CD14-positive monocyte (primary cell): ENCODE measurements at regions of chr3 and their contacts with region 1.

Region 1: DNA sequence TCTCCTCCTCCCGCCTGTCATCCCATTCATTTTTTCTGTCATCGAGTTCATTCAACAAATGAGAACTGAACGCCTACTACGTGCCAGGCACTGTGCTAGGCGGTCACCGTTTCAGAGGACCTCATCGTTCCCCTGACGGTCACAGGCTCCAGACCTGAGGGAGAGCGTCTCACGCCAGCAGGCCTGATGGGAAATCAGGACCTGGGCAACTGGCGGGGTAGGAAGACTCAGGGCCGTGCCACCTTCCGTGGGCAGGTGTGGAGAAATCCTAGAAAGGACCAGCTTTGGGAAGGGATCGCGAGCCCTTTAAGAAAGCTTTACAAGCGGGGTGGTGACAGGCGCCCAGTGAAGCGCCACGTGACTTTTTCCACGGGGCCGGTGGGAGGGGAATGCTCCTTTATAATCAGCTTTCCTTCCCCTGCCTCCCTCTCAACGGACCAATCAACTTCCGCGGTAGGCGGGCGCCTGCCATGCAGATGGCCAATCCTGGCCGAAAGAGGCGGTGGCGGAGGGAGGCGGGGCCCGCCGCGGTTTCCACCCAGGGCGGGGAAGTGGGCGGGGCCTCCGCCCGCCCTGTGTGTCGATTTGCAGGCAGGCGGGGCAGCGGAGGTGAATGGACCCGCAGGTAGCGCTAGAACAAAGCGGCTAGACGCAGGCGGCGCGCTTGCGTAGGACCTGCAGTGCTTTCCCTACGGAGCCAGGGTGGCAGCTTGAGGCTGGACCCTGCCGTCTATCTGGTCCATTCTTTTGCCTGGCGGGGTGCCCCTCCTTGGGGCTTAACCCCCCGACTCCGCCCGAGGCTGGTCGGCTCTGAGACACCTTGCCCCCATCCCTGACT is 816 bp upstream of the DUSP7 start:
- DNase-seq: peak; percentile 97 to 99 (median 98)
- H3K4me3 ChIP-seq: peak overlapping the region; percentile 55 to 89 (median 65)
- H3K4me3 Mint-ChIP-seq: peak overlapping the region; percentile 85 to 92
- H3K27ac ChIP-seq: peak overlapping the region; percentile 88 to 92
- H3K27ac Mint-ChIP-seq: peak overlapping the region; percentile 96 to 97 (median 96)
- H3K4me1 ChIP-seq: peaks cover 54 to 60% of the 10 kb centered on the region in 2 donors
- H3K4me1 Mint-ChIP-seq: peaks cover 53% of the 10 kb centered on the region
- H3K27me3 ChIP-seq: no peaks in the 10 kb centered on the region
- H3K27me3 Mint-ChIP-seq: peaks cover 0 to 4% (median 0%) of the 10 kb centered on the region in 3 donors
- CTCF ChIP-seq: no peak

Region 2: DNA sequence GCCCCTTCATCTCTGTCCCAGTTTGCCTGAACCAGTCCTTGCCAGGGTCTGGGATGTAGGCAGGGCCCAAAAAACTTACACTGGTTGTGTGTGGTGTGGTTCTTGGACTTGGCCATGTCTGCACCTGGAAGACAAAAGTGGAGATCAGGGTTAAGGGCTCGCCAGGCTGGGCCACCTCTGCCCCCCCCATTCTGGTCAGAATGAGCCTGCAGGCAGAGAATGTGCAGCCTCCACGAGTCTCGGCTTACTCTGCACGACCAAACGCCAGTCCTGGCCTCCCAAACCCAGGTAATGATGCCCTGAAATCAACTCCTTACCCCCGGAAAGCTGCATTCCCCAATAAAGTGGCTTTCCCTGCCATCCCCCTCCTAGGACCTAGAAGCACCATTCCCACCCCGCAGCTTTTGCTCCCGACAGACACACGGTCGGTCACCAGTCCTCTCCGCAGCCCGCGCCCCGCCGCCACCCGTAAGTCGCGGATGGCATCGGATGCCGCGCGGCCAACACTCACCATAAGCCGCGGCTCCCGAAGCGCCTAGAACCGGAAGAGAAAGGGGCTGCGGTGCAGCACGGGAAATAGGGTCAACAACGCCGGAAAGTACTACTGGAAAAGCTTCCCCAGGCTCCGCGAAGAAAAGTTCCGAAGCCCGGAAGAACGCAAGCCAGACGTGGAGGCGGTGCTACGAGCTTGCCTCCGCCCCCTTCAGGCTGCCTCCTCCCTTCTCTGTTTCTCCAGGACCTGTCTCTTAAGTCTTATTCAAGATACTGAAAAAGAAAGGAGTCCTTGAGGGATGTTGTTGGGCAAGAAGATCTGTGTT is 61.6 kb before region 1 on chr3 and contains the start of gene RPL29:
- intact Hi-C with region 1: loop called (anchors 5 kb)
- DNase-seq: peak; percentile 93 to 94 (median 93)
- H3K4me3 ChIP-seq: peak within 1 kb of the TSS; percentile 87 to 94 (median 93)
- H3K4me3 Mint-ChIP-seq: peak within 1 kb of the TSS; percentile 100
- H3K27ac ChIP-seq: peak within 1 kb of the TSS; percentile 88 to 89
- H3K27ac Mint-ChIP-seq: peak within 1 kb of the TSS; percentile 98 to 100 (median 99)
- H3K4me1 ChIP-seq: peaks cover 12 to 14% of the 10 kb centered on the region in 2 donors
- H3K4me1 Mint-ChIP-seq: peaks cover 23% of the 10 kb centered on the region
- H3K27me3 ChIP-seq: no peaks in the 10 kb centered on the region
- H3K27me3 Mint-ChIP-seq: peaks cover 0 to 3% (median 2%) of the 10 kb centered on the region in 3 donors
- CTCF ChIP-seq: no peak
- polyA plus RNA-seq, gene RPL29: 753 to 2,360 (median 856) TPM

Region 3: DNA sequence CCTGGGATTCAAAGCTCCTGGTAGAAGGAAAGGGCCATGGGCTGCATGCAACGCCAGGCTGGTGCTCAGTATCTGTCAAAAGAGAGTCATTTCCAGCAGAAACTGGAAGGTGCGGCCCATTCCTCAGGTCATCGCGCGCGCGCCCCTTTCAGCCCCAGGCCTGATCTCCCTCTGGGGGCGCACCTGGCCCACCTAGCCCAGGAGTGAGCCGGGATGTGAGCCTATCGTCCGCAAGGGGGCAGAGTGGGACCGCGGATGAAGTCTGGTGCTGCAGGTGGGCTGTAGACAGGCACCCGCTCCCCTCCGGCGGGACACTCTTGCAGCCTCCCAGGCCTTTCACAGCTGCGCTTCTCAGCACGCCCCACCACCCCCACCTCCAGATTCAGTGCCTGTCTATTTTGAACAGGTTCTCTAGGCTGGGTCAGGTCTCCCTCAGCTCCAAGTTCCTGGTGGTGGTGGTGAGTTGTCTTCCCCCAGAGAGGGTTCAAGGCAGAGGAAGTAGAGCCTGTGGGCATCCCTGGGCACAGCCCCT is 55.7 kb before region 1 on chr3:
- intact Hi-C with region 1: loop called (anchors 5 kb)
- DNase-seq: peak; percentile 46 to 69 (median 61)
- H3K4me3 ChIP-seq: no peak overlapping the region
- H3K4me3 Mint-ChIP-seq: no peak overlapping the region
- H3K27ac ChIP-seq: no peak overlapping the region
- H3K27ac Mint-ChIP-seq: no peak overlapping the region
- H3K4me1 ChIP-seq: peaks cover 18 to 22% of the 10 kb centered on the region in 2 donors
- H3K4me1 Mint-ChIP-seq: peaks cover 19% of the 10 kb centered on the region
- H3K27me3 ChIP-seq: no peaks in the 10 kb centered on the region
- H3K27me3 Mint-ChIP-seq: peaks cover 2 to 7% (median 6%) of the 10 kb centered on the region in 3 donors
- CTCF ChIP-seq: peak; percentile 95

Region 4: DNA sequence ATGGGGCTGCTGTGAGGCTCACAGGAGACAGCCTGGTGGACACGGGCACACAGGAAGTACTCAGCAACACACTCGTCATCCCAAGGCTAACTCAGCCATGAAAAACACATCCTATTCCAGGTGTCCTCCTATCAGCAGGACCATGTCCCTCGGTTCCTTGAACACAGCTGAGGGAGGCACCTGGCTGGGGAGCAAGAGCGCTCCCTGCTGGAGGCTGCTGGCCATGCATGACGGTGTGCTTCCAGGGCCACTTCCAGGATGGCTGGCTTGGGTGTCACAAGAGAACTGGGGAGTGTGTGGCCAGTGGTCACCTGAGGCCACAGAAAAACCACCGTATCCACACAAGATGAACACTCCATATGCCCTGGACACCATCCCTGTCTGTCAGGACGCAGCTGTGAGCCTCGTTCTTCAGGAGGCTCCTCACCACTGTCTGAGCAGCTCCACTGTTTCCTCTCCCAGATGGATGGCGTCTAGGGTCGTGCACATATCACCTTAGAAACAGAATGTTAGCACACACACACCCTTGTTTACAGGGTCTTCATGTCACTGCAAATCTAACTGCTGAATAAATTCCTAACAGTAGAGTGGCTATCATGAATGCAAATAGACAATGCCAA is 66.0 kb after region 1 on chr3:
- intact Hi-C with region 1: loop called (anchors 2 to 5 kb)
- DNase-seq: peak; percentile 66 to 78 (median 73)
- H3K4me3 ChIP-seq: peak overlapping the region in 1 of 3 experiments; percentile 61
- H3K4me3 Mint-ChIP-seq: no peak overlapping the region
- H3K27ac ChIP-seq: peak overlapping the region in 1 of 2 donors; percentile 85
- H3K27ac Mint-ChIP-seq: peak overlapping the region in 5 of 7 donors; percentile 49 to 94 (median 82)
- H3K4me1 ChIP-seq: peaks cover 55 to 57% of the 10 kb centered on the region in 2 donors
- H3K4me1 Mint-ChIP-seq: peaks cover 57% of the 10 kb centered on the region
- H3K27me3 ChIP-seq: no peaks in the 10 kb centered on the region
- H3K27me3 Mint-ChIP-seq: no peaks in the 10 kb centered on the region
- CTCF ChIP-seq: peak; percentile 96

Region 5: GRCh38 chr3:52154117-52155094 is 97.2 kb after region 1 on chr3 and contains the start of gene POC1A:
- intact Hi-C with region 1: loop called in 1 of 2 experiments (anchors 2 kb)
- DNase-seq: peak; percentile 97 to 99 (median 97)
- H3K4me3 ChIP-seq: peak within 1 kb of the TSS; percentile 55 to 88 (median 71)
- H3K4me3 Mint-ChIP-seq: peak within 1 kb of the TSS; percentile 91 to 99
- H3K27ac ChIP-seq: peak within 1 kb of the TSS; percentile 85 to 88
- H3K27ac Mint-ChIP-seq: peak within 1 kb of the TSS; percentile 97 to 100 (median 98)
- H3K4me1 ChIP-seq: peaks cover 17 to 19% of the 10 kb centered on the region in 2 donors
- H3K4me1 Mint-ChIP-seq: peaks cover 17% of the 10 kb centered on the region
- H3K27me3 ChIP-seq: no peaks in the 10 kb centered on the region
- H3K27me3 Mint-ChIP-seq: peaks cover 0 to 1% (median 0%) of the 10 kb centered on the region in 3 donors
- CTCF ChIP-seq: peak; percentile 15
- polyA plus RNA-seq, gene POC1A: 1.2 to 2.0 (median 1.5) TPM

Region 6: DNA sequence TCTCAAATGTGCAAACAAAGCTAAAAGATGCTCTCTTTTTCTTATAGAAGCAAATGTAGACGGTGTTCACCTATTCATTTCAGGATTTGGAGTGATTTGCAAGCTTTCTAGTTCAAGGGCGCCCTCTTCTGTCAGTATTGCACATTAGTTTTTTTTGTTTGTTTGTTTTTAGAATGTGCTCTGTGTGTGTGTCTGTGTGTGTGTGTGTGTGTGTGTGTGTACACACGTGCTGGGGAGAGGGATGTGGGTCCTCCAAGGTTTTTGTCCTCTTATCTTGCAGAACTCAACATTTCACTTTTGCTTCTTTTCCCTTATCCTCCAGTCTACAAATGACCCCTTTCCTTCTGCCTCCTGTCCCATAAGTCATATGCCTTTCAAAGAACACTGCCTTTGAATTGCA is 282.4 kb after region 1 on chr3:
- intact Hi-C with region 1: no loop called
- DNase-seq: peak; percentile 59 to 65 (median 61)
- H3K4me3 ChIP-seq: no peak overlapping the region
- H3K4me3 Mint-ChIP-seq: no peak overlapping the region
- H3K27ac ChIP-seq: no peak overlapping the region
- H3K27ac Mint-ChIP-seq: peak overlapping the region in 2 of 7 donors; percentile 6 to 35
- H3K4me1 ChIP-seq: peaks cover 25 to 27% of the 10 kb centered on the region in 2 donors
- H3K4me1 Mint-ChIP-seq: peaks cover 24% of the 10 kb centered on the region
- H3K27me3 ChIP-seq: no peaks in the 10 kb centered on the region
- H3K27me3 Mint-ChIP-seq: peaks cover 0 to 2% (median 0%) of the 10 kb centered on the region in 3 donors
- CTCF ChIP-seq: peak; percentile 79